ENCODE measurements at regions of chr19 and their contacts with region 1.

Region 1: DNA sequence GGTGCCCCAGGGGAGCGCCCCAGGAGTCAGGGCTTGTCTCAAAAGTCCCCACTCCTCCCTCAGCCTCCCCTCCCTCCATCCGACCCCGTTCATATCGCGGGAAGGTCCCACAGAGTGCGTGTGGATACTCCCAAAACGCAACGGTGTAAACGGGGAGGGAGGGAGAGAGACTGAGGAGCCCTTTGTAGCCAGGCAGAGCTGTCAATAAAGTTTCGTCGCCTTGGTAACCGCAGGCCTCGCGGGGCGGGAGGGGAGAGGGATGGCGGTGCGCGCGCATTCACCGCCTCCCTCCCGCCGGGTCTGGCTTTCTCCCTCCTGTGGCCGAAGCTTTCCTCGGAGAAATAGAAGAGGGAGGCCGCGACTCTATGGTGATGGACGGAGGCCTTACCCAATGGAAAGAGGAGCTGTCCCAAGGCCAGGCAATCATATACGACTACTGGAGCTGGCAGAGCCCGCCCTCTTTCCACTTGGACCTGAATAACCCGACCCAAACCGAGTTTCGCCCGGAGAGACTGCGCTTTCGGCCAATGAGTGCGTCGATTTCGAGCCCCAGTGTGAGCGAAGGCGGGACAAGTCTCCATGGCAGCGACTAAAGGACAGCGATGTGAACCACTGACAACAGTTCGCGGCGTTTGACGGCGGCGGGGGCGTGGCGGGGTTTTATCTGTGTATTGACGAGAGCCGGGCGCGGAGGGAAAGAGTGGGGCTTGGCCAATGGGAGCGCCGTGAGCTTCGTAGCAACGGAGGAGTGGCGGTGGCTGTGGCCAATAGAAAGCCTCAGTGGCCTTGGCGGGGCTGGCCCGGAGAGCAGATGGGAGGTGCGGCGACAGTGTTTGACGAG is at the start of gene KMT5C:
- H3K4me3 Mint-ChIP-seq: peak within 1 kb of the TSS; percentile 90
- H3K27ac Mint-ChIP-seq: peak within 1 kb of the TSS; percentile 91
- H3K4me1 Mint-ChIP-seq: peaks cover 32% of the 10 kb centered on the region
- H3K27me3 Mint-ChIP-seq: peaks cover 3% of the 10 kb centered on the region

Region 2: GRCh38 chr19:54653181-54653809 is 686.0 kb before region 1 on chr19:
- intact Hi-C with region 1: no loop called
- H3K4me3 Mint-ChIP-seq: no peak overlapping the region
- H3K27ac Mint-ChIP-seq: no peak overlapping the region
- H3K4me1 Mint-ChIP-seq: peaks cover 55% of the 10 kb centered on the region
- H3K27me3 Mint-ChIP-seq: peaks cover 15% of the 10 kb centered on the region

Region 3: GRCh38 chr19:55305483-55305882 is 33.8 kb before region 1 on chr19:
- intact Hi-C with region 1: loop called (anchors 2 kb)
- H3K4me3 Mint-ChIP-seq: no peak overlapping the region
- H3K27ac Mint-ChIP-seq: no peak overlapping the region
- H3K4me1 Mint-ChIP-seq: peaks cover 21% of the 10 kb centered on the region
- H3K27me3 Mint-ChIP-seq: peaks cover 4% of the 10 kb centered on the region

Region 4: GRCh38 chr19:55325172-55325571 is 14.1 kb before region 1 on chr19 and contains the start of gene TMEM150B:
- intact Hi-C with region 1: loop called (anchors 2 kb)
- H3K4me3 Mint-ChIP-seq: peak within 1 kb of the TSS; percentile 90
- H3K27ac Mint-ChIP-seq: peak within 1 kb of the TSS; percentile 94
- H3K4me1 Mint-ChIP-seq: peaks cover 68% of the 10 kb centered on the region
- H3K27me3 Mint-ChIP-seq: no peaks in the 10 kb centered on the region

Region 5: DNA sequence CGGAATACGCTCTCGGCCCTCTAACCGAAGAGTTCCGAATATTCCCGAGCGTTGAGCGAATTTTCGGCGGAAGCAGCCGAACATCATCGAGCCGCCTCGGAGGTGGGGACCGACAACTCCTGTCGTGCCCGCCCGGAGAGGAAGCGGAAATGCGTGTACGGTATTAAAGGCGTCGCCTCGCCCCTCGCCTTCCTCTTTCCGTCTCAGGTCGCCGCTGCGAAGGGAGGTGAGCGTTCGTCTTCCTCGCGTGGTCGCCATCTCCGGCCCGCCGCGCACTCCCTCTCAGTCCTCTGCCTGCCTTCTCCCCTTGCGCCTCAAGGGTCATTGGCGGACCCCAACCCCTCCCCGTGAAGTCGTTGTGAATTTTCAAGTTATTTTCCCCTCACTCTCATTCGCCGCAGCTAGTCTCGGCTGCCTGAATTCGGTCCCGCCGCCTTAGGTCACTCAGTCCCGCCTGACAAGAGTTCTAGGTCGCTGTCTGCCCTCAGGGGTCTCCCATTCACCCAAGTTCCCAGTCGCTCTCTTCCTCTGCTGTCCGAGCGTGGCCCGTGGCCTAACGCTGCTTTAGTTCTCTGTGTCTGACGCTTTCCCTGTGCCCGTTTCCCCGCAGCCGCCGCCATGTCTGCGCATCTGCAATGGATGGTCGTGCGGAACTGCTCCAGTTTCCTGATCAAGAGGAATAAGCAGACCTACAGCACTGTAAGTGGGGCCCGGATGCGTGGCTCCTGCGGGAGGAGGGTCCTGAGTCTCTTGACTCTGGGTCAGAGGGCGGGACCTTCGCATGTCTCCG is 46.7 kb after region 1 on chr19 and contains the start of gene RPL28:
- intact Hi-C with region 1: loop called (anchors 5 kb)
- H3K4me3 Mint-ChIP-seq: peak within 1 kb of the TSS; percentile 91
- H3K27ac Mint-ChIP-seq: peak within 1 kb of the TSS; percentile 95
- H3K4me1 Mint-ChIP-seq: peaks cover 72% of the 10 kb centered on the region
- H3K27me3 Mint-ChIP-seq: peaks cover 12% of the 10 kb centered on the region

Measured in dendritic cell treated with granulocyte-macrophage colony-stimulating factor and Interleukin-4, amounts not matched to agents 40 ng/mL and 50 ng/mL, for 4 days (primary cell).